ENCODE measurements at regions of chr9 and their contacts with region 1.

Region 1: GRCh38 chr9:4904322-4905134 is 80.5 kb upstream of the JAK2 start:
- DNase-seq: no peak
- H3K4me3 ChIP-seq: no peak overlapping the region
- CTCF ChIP-seq: no peak
- POLR2A ChIP-seq: no peak

Region 2: DNA sequence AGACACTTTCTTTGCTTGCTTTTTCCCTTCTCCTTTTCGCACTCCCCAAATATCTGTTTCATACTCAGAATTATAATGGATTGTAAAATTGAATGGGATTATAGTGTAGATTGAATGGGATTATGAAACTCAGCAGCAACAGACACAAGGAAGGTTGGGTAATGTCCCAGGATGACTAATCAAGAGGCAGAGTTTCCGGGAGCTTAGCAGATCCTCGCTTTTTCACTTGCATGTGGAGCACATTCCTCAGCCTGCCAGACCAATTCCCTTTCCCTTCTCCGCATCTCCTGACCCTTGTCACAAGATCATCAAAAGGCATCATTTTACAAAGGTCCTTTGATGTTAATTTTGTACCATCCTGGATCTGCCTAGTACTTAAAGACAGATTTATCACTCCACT is 469.3 kb before region 1 on chr9:
- intact Hi-C with region 1: no loop called
- DNase-seq: no peak
- H3K4me3 ChIP-seq: no peak overlapping the region
- CTCF ChIP-seq: no peak
- POLR2A ChIP-seq: no peak

Region 3: GRCh38 chr9:4946937-4947336 is 42.4 kb after region 1 on chr9:
- intact Hi-C with region 1: no loop called
- DNase-seq: no peak
- H3K4me3 ChIP-seq: no peak overlapping the region
- CTCF ChIP-seq: no peak
- POLR2A ChIP-seq: no peak

Region 4: GRCh38 chr9:4967523-4967922 is 63.0 kb after region 1 on chr9:
- intact Hi-C with region 1: loop called (anchors 10 kb)
- DNase-seq: no peak
- H3K4me3 ChIP-seq: no peak overlapping the region
- CTCF ChIP-seq: no peak
- POLR2A ChIP-seq: no peak

Measured in lower leg skin (tissue), 4 donors.